Gastrocnemius medialis (tissue), 4 donors: ENCODE measurements at regions of chr9 and their contacts with region 1.

Region 1: GRCh38 chr9:68844631-68845612 is 139.9 kb downstream of the PIP5K1B start:
- DNase-seq: no peak
- ATAC-seq: no peak
- H3K4me3 ChIP-seq: no peak overlapping the region
- H3K27ac ChIP-seq: no peak overlapping the region
- H3K4me1 ChIP-seq: peaks cover 7 to 13% of the 10 kb centered on the region in 2 donors
- H3K27me3 ChIP-seq: no peaks in the 10 kb centered on the region
- CTCF ChIP-seq: peak; percentile 12 to 55 (median 40)
- POLR2A ChIP-seq: no peak

Region 2: GRCh38 chr9:68739621-68740174 is 105.2 kb before region 1 on chr9:
- in situ Hi-C with region 1: loop called in 1 of 4 experiments (anchors 25 kb)
- intact Hi-C with region 1: no loop called
- DNase-seq: no peak
- ATAC-seq: no peak
- H3K4me3 ChIP-seq: no peak overlapping the region
- H3K27ac ChIP-seq: no peak overlapping the region
- H3K4me1 ChIP-seq: no peaks in the 10 kb centered on the region
- H3K27me3 ChIP-seq: no peaks in the 10 kb centered on the region
- CTCF ChIP-seq: no peak
- POLR2A ChIP-seq: no peak

Region 3: DNA sequence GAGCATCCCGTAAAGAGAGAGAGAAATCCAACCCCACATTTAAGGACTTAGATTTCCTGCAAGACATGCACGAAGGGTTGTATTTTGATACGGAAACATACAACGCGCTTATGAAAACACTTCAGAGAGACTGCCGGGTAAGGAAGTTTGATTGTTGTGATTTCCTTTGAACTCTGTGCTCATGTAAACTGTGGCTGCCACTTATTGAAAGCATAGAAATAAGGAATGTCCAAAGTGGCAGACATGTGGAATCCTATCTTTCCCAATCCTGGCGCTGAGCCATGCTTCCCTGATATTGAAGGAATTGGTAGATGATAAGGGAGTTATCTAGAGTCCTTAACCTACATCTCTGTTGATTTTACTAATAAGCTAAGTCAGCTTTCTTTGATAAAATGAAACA is 49.6 kb after region 1 on chr9:
- in situ Hi-C with region 1: no loop called
- intact Hi-C with region 1: no loop called
- DNase-seq: no peak
- ATAC-seq: no peak
- H3K4me3 ChIP-seq: no peak overlapping the region
- H3K27ac ChIP-seq: no peak overlapping the region
- H3K4me1 ChIP-seq: peaks cover 0 to 2% of the 10 kb centered on the region in 2 donors
- H3K27me3 ChIP-seq: no peaks in the 10 kb centered on the region
- CTCF ChIP-seq: no peak
- POLR2A ChIP-seq: no peak

Region 4: DNA sequence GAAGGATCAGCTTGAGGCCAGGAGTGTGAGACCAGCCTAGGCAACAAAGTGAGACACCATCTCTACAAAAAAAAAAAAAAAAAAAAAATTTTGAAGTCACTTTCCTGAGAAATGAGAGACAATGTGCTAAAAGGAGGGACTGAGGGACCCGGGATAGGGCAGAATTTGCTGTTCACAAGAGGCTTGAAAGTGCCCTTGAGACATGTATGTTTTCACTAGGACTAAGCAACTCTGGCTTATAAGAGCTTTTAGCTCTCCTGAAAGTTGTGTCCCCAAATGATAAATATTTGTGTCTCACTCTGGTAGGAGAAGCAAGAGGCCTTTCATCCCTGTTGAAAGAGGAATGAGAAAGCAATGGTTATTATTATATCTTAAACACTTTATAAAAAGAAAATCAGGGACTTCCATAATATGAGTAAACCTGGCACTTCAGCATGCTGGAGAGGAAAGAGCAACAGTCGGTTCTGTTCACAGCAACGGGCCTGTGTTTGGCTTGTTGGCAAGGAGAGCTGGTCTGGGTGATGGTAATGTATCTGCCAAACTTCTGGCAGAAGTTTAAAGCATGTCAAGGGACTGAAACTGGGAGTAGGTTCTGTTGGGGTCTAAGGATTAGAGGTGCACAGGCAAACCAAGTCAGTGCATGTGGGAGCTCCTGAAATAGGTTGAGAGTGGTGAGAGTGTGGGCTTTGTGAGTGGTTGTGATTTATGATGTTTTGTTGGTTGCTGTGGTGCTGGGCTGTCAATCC is 512.3 kb after region 1 on chr9:
- in situ Hi-C with region 1: no loop called
- intact Hi-C with region 1: no loop called
- DNase-seq: peak in 1 of 2 donors; percentile 25
- ATAC-seq: peak; percentile 46 to 77
- H3K4me3 ChIP-seq: peak overlapping the region in 1 of 4 donors; percentile 16
- H3K27ac ChIP-seq: peak overlapping the region; percentile 62 to 81 (median 72)
- H3K4me1 ChIP-seq: peaks cover 48 to 58% of the 10 kb centered on the region in 2 donors
- H3K27me3 ChIP-seq: no peaks in the 10 kb centered on the region
- CTCF ChIP-seq: no peak
- POLR2A ChIP-seq: no peak